Heart left ventricle (tissue), 16 donors: ENCODE measurements at regions of chr19 and their contacts with region 1.

Region 1: DNA sequence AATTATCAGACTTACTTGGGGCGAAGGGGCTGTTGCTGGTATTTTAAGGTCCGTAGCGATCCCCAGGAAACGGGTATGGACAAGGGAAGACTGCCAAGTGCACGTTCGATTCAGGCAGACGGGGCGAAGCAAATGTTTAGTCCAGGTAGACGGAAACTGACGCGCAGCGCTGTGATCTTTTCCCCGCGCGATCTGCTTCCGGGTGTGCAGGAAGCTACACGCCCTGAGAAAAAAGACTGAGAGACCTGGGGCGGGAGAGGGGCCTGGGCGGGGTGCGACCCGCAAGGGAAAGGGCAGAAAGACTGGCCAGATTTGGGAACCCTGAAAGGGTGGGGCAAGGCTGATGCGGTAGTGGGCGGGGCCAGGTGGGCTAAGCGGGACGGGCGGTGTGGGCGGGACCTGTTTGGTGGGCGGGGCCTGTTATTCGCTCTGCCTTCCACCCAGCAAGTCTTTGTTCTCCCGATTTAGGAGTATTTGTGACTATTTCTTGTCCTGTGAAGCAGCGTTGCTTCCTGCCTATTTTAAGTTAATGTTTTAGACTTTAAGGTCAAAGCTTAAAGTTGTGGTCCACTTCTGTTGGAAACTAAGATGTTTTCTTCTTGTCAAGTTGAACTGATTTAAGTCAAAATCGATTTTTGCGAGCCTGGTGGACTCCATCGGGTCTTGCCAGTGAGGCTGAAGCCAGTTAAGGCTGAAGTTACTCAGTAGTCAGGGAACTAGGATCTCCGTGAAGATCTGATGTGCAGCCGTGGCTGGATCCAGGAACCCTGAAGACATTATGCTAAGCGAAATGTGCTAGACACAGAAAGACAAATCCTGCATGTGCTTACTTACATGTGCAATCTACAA is at the start of gene ZNF836:
- DNase-seq: peak; percentile 92 to 93 (median 93)
- ATAC-seq: peak; percentile 96 to 99 (median 98)
- H3K4me3 ChIP-seq: peak within 1 kb of the TSS; percentile 62 to 94 (median 83)
- H3K27ac ChIP-seq: peak within 1 kb of the TSS; percentile 28 to 92 (median 84)
- H3K4me1 ChIP-seq: peaks cover 0 to 19% (median 11%) of the 10 kb centered on the region in 12 donors
- H3K27me3 ChIP-seq: no peaks in the 10 kb centered on the region
- CTCF ChIP-seq: no peak
- POLR2A ChIP-seq: no peak
- total RNA-seq, gene ZNF836: 4.1 to 11.0 (median 7.3) TPM

Region 2: GRCh38 chr19:52189735-52190486 is 18.4 kb after region 1 on chr19 and contains the start of gene PPP2R1A:
- intact Hi-C with region 1: loop called in 3 of 10 experiments (anchors 1 to 2 kb)
- DNase-seq: peak; percentile 98 to 100 (median 100)
- ATAC-seq: peak; percentile 88 to 97 (median 94)
- H3K4me3 ChIP-seq: peak within 1 kb of the TSS; percentile 55 to 97 (median 90)
- H3K27ac ChIP-seq: peak within 1 kb of the TSS; percentile 95 to 100 (median 98)
- H3K4me1 ChIP-seq: peaks cover 14 to 54% (median 43%) of the 10 kb centered on the region in 12 donors
- H3K27me3 ChIP-seq: no peaks in the 10 kb centered on the region
- CTCF ChIP-seq: peak in 1 of 12 donors; percentile 6
- POLR2A ChIP-seq: peak; percentile 60 to 61
- total RNA-seq, gene PPP2R1A: 345 to 447 (median 370) TPM

Region 3: DNA sequence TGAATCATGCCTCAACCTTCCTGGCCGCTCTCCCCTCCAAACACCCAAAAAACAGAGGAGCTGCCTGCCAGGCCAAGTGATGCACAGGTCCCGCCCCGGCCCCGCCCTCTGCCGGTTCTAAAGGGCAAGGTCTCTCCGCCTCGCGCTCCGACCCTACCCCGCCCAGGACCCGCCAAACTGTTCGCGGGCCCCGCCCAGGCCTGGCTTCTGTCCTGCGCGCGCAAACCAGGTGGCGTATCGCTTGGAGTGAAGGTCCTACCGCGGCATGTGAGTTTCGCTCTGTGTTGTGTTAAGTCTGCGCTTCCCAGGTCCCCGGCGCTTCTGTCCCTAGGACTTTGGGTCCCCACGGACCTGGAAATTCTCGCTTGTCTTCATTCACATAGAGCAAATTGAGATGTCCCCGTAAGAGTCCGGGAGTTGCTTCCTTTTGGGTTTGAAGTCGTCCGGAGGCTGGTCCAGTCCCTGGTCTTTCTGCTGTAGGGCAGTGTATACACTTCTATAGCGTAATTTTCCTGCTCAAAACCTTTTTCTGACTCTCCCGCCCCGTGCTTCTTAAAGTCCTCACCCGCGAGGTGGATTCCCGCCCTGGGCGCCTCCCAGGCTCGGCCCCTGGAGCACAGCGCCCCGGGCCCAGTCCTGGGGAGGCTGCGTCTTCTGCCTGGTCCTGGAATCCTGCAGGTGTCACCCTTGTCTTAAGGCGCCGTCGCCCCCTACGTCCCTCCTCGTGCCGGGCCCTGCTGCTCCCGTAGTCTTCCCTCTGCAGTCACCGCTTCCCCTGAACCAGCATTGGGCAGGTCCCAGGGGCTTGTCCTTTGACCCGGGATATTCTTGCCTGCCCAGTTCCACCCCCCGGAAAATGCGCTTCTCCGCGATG is 321.3 kb after region 1 on chr19:
- intact Hi-C with region 1: no loop called
- DNase-seq: peak in 1 of 5 donors; percentile 42
- ATAC-seq: peak in 3 of 4 donors; percentile 13 to 76 (median 72)
- H3K4me3 ChIP-seq: peak overlapping the region in 4 of 12 donors; percentile 11 to 28 (median 19)
- H3K27ac ChIP-seq: no peak overlapping the region
- H3K4me1 ChIP-seq: no peaks in the 10 kb centered on the region
- H3K27me3 ChIP-seq: no peaks in the 10 kb centered on the region
- CTCF ChIP-seq: peak in 3 of 12 donors; percentile 12 to 18 (median 12)
- POLR2A ChIP-seq: no peak